Ascending aorta (tissue), 2 donors: ENCODE measurements at regions of chr6 and their contacts with region 1.

Region 1: DNA sequence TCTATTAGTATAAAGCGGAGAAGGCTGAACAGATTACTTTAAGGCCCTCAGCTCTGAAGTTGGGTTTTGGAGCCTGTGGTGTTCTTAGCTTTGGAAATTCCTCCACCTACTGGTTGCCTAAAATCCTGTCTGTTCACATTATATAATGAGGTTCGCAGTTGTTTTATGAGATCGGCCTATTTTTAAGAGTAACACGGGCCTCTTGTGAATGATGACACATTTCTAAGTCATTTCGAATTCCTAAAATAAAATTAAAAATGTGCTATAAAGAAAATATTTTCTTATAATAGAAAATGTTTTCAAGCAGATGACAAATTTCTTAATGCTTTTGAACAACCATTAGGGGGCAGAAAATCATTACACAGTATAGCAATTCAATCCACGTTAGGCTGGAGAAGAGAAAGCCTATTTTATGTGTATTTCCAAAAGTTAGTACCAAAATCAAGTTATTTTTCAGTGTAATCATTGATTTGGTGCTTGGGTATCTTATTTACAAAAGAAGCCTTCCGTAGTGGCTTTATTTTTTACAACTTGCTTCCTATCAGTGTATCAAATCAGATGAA is 15.8 kb upstream of the FAM8A1 start:
- DNase-seq: no peak
- H3K4me3 ChIP-seq: no peak overlapping the region
- H3K27ac ChIP-seq: peak overlapping the region; percentile 71 to 72
- H3K4me1 ChIP-seq: no peaks in the 10 kb centered on the region
- H3K27me3 ChIP-seq: no peaks in the 10 kb centered on the region
- CTCF ChIP-seq: peak; percentile 60 to 85 (median 81)

Region 2: DNA sequence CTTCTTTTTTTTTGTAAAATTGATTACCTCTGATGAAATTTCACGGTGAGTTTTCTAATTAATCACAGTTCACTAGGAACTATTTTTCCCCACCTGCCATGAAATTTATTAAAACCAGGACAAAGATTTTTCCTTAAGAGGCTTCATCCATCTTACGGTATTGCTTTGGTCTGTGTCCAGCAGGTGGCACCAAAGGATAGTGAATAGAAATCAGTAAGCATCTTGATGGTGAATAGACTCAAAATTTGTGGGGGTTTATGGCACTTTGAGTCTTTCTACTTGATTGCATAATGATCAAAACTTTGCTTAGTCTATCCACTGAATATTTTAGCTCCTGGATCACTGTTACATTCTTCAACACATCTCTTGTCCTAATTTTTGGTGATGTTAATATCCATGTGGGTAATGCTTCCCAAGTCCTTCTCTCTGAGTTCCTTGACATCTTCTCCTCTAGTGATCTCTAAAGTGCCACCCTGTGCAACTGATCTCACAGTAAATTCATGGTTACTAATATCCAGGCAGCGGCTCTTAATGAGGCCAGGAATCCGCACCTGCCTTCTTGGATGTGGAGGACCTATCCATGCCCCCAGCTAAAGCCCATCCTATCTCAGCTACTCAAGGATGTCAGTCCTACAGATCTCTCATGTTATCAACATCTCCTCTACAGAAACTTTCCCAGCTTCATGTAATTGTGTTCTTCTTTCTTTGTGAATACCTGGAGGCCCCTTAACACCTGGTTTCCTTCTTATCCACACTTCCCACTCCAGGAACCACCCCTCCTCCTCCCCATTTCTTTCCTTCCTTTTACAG is 428.0 kb before region 1 on chr6:
- intact Hi-C with region 1: loop called (anchors 1 kb)
- DNase-seq: peak in 1 of 2 donors; percentile 80
- H3K4me3 ChIP-seq: no peak overlapping the region
- H3K27ac ChIP-seq: no peak overlapping the region
- H3K4me1 ChIP-seq: no peaks in the 10 kb centered on the region
- H3K27me3 ChIP-seq: no peaks in the 10 kb centered on the region
- CTCF ChIP-seq: peak; percentile 73 to 83 (median 79)

Region 3: DNA sequence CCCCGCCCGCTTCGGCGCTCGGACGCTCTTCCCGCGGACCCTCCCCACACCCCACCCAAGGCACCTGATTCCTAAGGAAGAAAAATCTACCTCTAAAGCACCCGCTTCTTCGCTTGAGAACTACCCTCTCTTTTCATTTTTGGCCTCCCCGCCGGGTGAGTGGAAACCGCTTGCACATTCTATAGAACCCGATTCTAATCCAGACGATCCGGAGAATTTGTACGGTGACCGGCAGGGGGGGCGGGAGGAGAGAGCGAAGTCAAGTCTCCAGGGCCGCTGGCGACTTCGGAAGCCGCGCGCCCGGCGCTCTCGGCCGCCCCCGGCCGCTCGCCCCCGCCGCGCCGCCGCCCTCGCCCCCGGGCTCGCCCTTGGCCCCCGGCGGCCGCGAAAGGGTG is 303.2 kb before region 1 on chr6 and contains the start of gene RBM24:
- intact Hi-C with region 1: loop called (anchors 2 kb)
- DNase-seq: peak in 1 of 2 donors; percentile 84
- H3K4me3 ChIP-seq: peak within 1 kb of the TSS; percentile 82 to 97
- H3K27ac ChIP-seq: peak within 1 kb of the TSS; percentile 75 to 91
- H3K4me1 ChIP-seq: peaks cover 0 to 3% of the 10 kb centered on the region in 2 donors
- H3K27me3 ChIP-seq: no peaks in the 10 kb centered on the region
- CTCF ChIP-seq: peak; percentile 18 to 44 (median 41)
- total RNA-seq, gene RBM24: 5.4 TPM

Region 4: DNA sequence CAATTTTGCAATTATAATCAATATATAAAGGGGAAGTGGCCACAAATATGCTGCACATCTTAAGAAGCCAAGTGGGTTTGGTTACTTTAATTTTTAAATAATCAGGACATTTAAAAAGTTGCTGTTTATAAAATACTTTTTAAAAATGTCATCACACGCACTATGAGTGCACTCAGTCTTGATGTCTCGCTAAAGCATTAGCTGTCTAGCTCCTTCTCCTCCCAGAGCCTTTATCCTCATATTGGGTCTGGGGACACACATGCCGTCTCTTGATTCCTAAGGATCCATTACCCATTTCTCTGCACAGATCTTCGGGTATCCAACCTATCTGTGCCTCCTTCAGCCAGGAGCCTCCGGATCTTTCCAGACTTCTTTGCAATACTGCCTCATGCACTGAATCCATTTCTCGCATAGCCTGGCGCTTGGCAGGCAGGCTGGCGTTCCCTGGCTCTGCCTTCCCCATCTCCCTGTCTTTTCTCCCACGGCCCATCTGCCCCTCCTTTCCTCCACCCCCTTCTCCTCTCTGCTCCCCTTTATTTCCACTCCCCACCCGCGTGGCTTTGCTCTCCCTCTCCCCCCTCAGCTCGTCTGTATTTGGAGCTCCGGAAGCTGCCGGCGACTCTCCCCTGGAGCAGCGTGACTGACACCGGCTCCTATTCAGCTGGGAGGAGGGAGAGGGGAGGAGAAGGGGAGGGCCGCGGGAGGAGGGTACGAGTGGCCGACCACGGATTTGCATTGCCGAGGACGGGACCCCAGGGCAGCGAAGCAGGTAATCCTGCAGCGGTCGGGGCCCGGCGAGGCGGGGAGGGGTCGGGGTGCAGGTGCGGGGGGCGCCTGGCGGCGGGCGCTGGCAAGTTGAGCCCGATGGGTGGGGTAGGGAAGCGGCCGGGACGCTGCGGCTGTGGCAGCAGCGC is 191.1 kb before region 1 on chr6 and contains the start of gene CAP2:
- intact Hi-C with region 1: loop called (anchors 2 kb)
- DNase-seq: peak in 1 of 2 donors; percentile 81
- H3K4me3 ChIP-seq: peak within 1 kb of the TSS; percentile 81 to 94
- H3K27ac ChIP-seq: peak within 1 kb of the TSS; percentile 75 to 87
- H3K4me1 ChIP-seq: peaks cover 0 to 10% of the 10 kb centered on the region in 2 donors
- H3K27me3 ChIP-seq: no peaks in the 10 kb centered on the region
- CTCF ChIP-seq: no peak
- total RNA-seq, gene CAP2: 7.1 TPM

Region 5: GRCh38 chr6:17808609-17809008 is 224.3 kb after region 1 on chr6:
- intact Hi-C with region 1: loop called (anchors 2 kb)
- DNase-seq: no peak
- H3K4me3 ChIP-seq: no peak overlapping the region
- H3K27ac ChIP-seq: no peak overlapping the region
- H3K4me1 ChIP-seq: no peaks in the 10 kb centered on the region
- H3K27me3 ChIP-seq: no peaks in the 10 kb centered on the region
- CTCF ChIP-seq: no peak

Region 6: GRCh38 chr6:18047406-18047805 is 463.1 kb after region 1 on chr6:
- intact Hi-C with region 1: loop called (anchors 10 kb)
- DNase-seq: peak in 1 of 2 donors; percentile 58
- H3K4me3 ChIP-seq: no peak overlapping the region
- H3K27ac ChIP-seq: peak overlapping the region; percentile 61 to 77
- H3K4me1 ChIP-seq: peaks cover 10 to 22% of the 10 kb centered on the region in 2 donors
- H3K27me3 ChIP-seq: no peaks in the 10 kb centered on the region
- CTCF ChIP-seq: no peak

Region 7: GRCh38 chr6:18122124-18123093 is 538.1 kb after region 1 on chr6 and contains the start of gene NHLRC1:
- intact Hi-C with region 1: loop called (anchors 5 kb)
- DNase-seq: peak; percentile 68 to 95
- H3K4me3 ChIP-seq: peak within 1 kb of the TSS; percentile 66 to 77
- H3K27ac ChIP-seq: peak within 1 kb of the TSS; percentile 15 to 63
- H3K4me1 ChIP-seq: peaks cover 0 to 10% of the 10 kb centered on the region in 2 donors
- H3K27me3 ChIP-seq: no peaks in the 10 kb centered on the region
- CTCF ChIP-seq: peak; percentile 90 to 98 (median 96)
- total RNA-seq, gene NHLRC1: 0.32 TPM